Naive thymus-derived CD4-positive, alpha-beta T cell (primary cell): ENCODE measurements at regions of chr14 and their contacts with region 1.

Region 1: GRCh38 chr14:72904840-72905561 is 11.1 kb upstream of the DPF3 start:
- DNase-seq: peak; percentile 18 to 78 (median 64)
- ATAC-seq: peak; percentile 85
- H3K4me3 ChIP-seq: no peak overlapping the region
- H3K4me3 Mint-ChIP-seq: no peak overlapping the region
- H3K27ac ChIP-seq: no peak overlapping the region
- H3K27ac Mint-ChIP-seq: peak overlapping the region in 1 of 9 donors; percentile 7
- H3K4me1 ChIP-seq: no peaks in the 10 kb centered on the region
- H3K4me1 Mint-ChIP-seq: peaks cover 0 to 24% (median 0%) of the 10 kb centered on the region in 7 donors
- H3K27me3 ChIP-seq: no peaks in the 10 kb centered on the region
- H3K27me3 Mint-ChIP-seq: peaks cover 1 to 42% (median 7%) of the 10 kb centered on the region in 5 donors

Region 2: DNA sequence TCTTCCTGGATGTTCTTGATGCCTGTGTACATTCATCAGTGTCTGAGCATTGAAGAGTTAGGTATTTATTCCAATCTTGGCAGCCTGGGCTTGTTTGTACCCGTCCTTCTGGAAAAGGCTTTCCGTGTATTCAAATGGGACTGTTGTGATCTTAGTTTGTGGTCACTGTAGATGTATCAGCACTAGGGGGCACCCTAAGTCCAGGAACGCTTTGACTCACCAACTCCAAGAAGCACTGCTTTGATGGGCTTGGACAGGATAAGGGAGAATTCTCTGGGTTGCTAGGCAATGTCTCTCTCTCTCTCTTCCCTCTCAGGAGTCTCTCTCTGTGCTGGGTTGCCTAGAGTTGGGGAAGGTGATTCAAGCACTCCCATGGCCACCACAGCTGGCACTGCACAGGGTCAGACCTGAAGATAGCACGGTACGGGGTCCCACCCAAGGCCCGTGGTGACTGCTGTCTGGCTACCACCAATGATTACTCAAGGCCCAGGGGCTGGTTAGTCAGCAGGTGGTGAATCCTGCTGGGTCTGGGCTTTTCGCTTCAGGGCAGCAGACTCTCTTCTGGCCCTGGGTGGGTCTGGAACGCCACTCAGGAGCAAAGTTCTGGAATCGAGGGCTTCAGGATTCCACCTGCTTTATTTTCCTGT is 1183.9 kb before region 1 on chr14:
- CTCF ChIA-PET with region 1: no interaction called
- POLR2A ChIA-PET with region 1: no interaction called
- intact Hi-C with region 1: loop called in 1 of 2 experiments (anchors 5 kb)
- DNase-seq: no peak
- ATAC-seq: no peak
- H3K4me3 ChIP-seq: no peak overlapping the region
- H3K4me3 Mint-ChIP-seq: no peak overlapping the region
- H3K27ac ChIP-seq: no peak overlapping the region
- H3K27ac Mint-ChIP-seq: no peak overlapping the region
- H3K4me1 ChIP-seq: no peaks in the 10 kb centered on the region
- H3K4me1 Mint-ChIP-seq: peaks cover 0 to 6% (median 0%) of the 10 kb centered on the region in 7 donors
- H3K27me3 ChIP-seq: no peaks in the 10 kb centered on the region
- H3K27me3 Mint-ChIP-seq: no peaks in the 10 kb centered on the region

Region 3: GRCh38 chr14:72023722-72024407 is 881.1 kb before region 1 on chr14:
- CTCF ChIA-PET with region 1: no interaction called
- POLR2A ChIA-PET with region 1: no interaction called
- intact Hi-C with region 1: loop called in 1 of 2 experiments (anchors 10 kb)
- DNase-seq: peak in 5 of 9 donors; percentile 6 to 33 (median 17)
- ATAC-seq: peak; percentile 61
- H3K4me3 ChIP-seq: no peak overlapping the region
- H3K4me3 Mint-ChIP-seq: no peak overlapping the region
- H3K27ac ChIP-seq: no peak overlapping the region
- H3K27ac Mint-ChIP-seq: no peak overlapping the region
- H3K4me1 ChIP-seq: no peaks in the 10 kb centered on the region
- H3K4me1 Mint-ChIP-seq: peaks cover 0 to 9% (median 0%) of the 10 kb centered on the region in 7 donors
- H3K27me3 ChIP-seq: no peaks in the 10 kb centered on the region
- H3K27me3 Mint-ChIP-seq: peaks cover 35 to 49% (median 40%) of the 10 kb centered on the region in 5 donors

Region 4: DNA sequence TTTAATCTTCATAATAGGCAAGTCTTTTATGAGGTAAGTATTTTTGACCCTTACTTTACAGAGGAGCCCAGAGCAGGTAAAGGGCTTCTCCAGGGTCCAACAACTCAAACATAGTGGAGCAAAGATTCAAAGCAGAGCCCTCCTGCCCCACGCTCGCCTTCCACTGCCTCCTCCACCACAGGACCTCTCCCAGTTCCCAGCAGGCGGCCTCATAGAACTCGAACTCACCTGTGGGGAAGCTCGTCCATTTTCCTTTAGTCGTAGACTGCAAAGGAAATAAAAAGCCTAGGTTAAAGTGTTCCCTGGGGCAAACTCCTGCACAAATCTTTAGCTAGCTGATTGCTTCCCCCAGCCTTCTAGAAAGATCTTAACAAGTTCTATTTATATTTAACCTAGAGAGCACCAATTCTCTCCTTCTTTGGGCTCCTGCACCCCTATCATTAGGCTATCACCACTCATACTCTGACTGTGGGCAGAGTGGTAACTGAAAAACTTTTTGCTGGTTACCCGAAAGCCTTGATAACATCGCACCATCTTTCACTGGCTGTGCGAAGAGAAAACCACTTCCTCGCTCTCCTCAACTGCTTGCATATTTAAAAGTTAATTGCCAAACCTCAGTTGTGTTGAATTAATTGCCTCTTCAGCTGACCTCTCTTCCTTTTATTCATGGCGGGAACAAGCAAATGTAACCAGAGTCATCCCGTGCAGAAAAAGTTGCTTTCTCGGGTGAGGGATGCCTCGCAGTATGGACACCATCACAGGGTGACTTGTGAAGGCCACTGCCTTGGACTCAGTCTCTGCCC is 310.7 kb before region 1 on chr14:
- CTCF ChIA-PET with region 1: no interaction called
- POLR2A ChIA-PET with region 1: no interaction called
- intact Hi-C with region 1: loop called in 1 of 2 experiments (anchors 10 kb)
- DNase-seq: peak in 6 of 9 donors; percentile 32 to 51 (median 36)
- ATAC-seq: peak; percentile 86
- H3K4me3 ChIP-seq: no peak overlapping the region
- H3K4me3 Mint-ChIP-seq: peak overlapping the region; percentile 18 to 75 (median 68)
- H3K27ac ChIP-seq: no peak overlapping the region
- H3K27ac Mint-ChIP-seq: peak overlapping the region; percentile 7 to 83 (median 52)
- H3K4me1 ChIP-seq: peaks cover 20 to 45% of the 10 kb centered on the region in 2 donors
- H3K4me1 Mint-ChIP-seq: peaks cover 28 to 63% (median 55%) of the 10 kb centered on the region in 7 donors
- H3K27me3 ChIP-seq: peaks cover 0 to 6% of the 10 kb centered on the region in 2 donors
- H3K27me3 Mint-ChIP-seq: peaks cover 0 to 39% (median 9%) of the 10 kb centered on the region in 5 donors

Region 5: DNA sequence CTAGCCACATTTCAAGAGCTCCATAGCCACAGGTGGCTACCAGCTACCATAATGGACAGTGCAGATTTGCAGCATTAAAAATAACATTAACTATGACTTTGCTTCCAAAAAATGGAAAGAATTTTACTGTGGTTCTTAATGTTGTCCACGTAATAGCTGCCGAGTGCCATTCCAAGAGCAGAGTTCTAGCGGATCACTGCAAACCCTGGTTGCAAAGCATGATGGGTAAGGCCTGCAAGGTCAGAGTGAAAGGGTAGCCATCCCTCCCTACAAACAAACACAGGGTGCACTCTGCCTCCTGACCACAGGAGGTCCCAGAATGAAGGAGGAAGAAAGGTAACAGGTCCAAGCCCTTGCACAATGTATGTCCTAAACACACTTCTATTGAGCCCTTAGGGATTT is 168.7 kb before region 1 on chr14:
- CTCF ChIA-PET with region 1: no interaction called
- POLR2A ChIA-PET with region 1: no interaction called
- intact Hi-C with region 1: loop called in 1 of 2 experiments (anchors 10 kb)
- DNase-seq: no peak
- ATAC-seq: no peak
- H3K4me3 ChIP-seq: no peak overlapping the region
- H3K4me3 Mint-ChIP-seq: no peak overlapping the region
- H3K27ac ChIP-seq: no peak overlapping the region
- H3K27ac Mint-ChIP-seq: no peak overlapping the region
- H3K4me1 ChIP-seq: no peaks in the 10 kb centered on the region
- H3K4me1 Mint-ChIP-seq: peaks cover 0 to 1% (median 0%) of the 10 kb centered on the region in 7 donors
- H3K27me3 ChIP-seq: no peaks in the 10 kb centered on the region
- H3K27me3 Mint-ChIP-seq: peaks cover 0 to 4% (median 0%) of the 10 kb centered on the region in 5 donors

Region 6: GRCh38 chr14:72893636-72894321 is 11.2 kb before region 1 on chr14 and contains the start of gene DPF3:
- CTCF ChIA-PET with region 1: interaction called, 6 read pairs
- POLR2A ChIA-PET with region 1: no interaction called
- intact Hi-C with region 1: loop called in 1 of 2 experiments (anchors 1 kb)
- DNase-seq: peak; percentile 80 to 91 (median 86)
- ATAC-seq: peak; percentile 99
- H3K4me3 ChIP-seq: peak within 1 kb of the TSS; percentile 74
- H3K4me3 Mint-ChIP-seq: peak within 1 kb of the TSS; percentile 91 to 99 (median 97)
- H3K27ac ChIP-seq: peak within 1 kb of the TSS; percentile 51
- H3K27ac Mint-ChIP-seq: peak within 1 kb of the TSS; percentile 22 to 94 (median 56)
- H3K4me1 ChIP-seq: peaks cover 9 to 20% of the 10 kb centered on the region in 2 donors
- H3K4me1 Mint-ChIP-seq: peaks cover 20 to 36% (median 24%) of the 10 kb centered on the region in 7 donors
- H3K27me3 ChIP-seq: peaks cover 6 to 10% of the 10 kb centered on the region in 2 donors
- H3K27me3 Mint-ChIP-seq: peaks cover 37 to 72% (median 53%) of the 10 kb centered on the region in 5 donors
- total RNA-seq, gene DPF3: 0.24 to 5.5 (median 0.61) TPM in 4 of 5 experiments, not detected in the other

Region 7: DNA sequence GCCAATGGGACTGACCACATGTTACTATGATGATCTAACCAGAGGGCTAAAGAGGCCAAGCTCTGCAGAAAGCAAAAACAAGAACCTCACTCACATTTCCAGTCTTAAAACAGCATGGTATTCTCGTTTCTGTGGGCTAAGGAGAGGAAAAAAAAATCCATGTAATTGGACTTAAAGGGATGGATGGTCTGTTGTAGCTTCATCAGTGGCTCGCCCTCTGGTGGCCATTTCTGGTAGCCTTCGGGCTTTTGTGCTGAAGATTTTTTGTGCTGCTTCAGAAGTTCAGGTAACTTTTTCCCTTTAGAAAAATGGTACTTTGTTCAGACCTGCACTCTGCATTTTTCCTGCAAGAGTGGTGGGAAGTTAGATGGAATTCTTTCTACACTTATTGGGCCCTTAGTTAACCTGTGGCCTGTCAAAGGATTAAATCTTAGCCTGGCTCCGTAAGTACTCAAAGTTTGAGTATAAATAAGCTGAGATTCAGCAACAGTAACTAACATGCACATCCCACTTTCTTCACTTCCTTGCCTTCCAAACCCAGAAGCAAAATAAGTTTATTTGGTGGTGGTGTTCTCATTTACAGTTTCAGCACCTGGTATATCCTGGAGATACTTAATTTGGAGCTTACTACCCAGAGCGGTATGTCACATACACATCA is 43.6 kb after region 1 on chr14:
- CTCF ChIA-PET with region 1: interaction called, 4 read pairs
- POLR2A ChIA-PET with region 1: no interaction called
- intact Hi-C with region 1: loop called (anchors 2 to 5 kb)
- DNase-seq: peak in 8 of 9 donors; percentile 24 to 63 (median 48)
- ATAC-seq: peak; percentile 65
- H3K4me3 ChIP-seq: no peak overlapping the region
- H3K4me3 Mint-ChIP-seq: no peak overlapping the region
- H3K27ac ChIP-seq: no peak overlapping the region
- H3K27ac Mint-ChIP-seq: no peak overlapping the region
- H3K4me1 ChIP-seq: no peaks in the 10 kb centered on the region
- H3K4me1 Mint-ChIP-seq: peaks cover 0 to 8% (median 0%) of the 10 kb centered on the region in 7 donors
- H3K27me3 ChIP-seq: no peaks in the 10 kb centered on the region
- H3K27me3 Mint-ChIP-seq: no peaks in the 10 kb centered on the region